Activated CD4-positive, alpha-beta memory T cell treated with anti-CD3 and anti-CD28 coated beads for 36 hours (primary cell): ENCODE measurements at regions of chr15 and their contacts with region 1.

Region 1: GRCh38 chr15:58070801-58071418 is 5.4 kb upstream of the ALDH1A2 start:
- DNase-seq: peak; percentile 65
- H3K4me3 Mint-ChIP-seq: no peak overlapping the region
- H3K27ac Mint-ChIP-seq: no peak overlapping the region
- H3K4me1 Mint-ChIP-seq: peaks cover 6% of the 10 kb centered on the region
- H3K27me3 Mint-ChIP-seq: peaks cover 41% of the 10 kb centered on the region

Region 2: GRCh38 chr15:57561041-57561711 is 509.7 kb before region 1 on chr15:
- CTCF ChIA-PET with region 1: interaction called, 3 read pairs
- POLR2A ChIA-PET with region 1: no interaction called
- intact Hi-C with region 1: loop called (anchors 1 kb)
- DNase-seq: peak; percentile 73
- H3K4me3 Mint-ChIP-seq: peak overlapping the region; percentile 5
- H3K27ac Mint-ChIP-seq: peak overlapping the region; percentile 74
- H3K4me1 Mint-ChIP-seq: peaks cover 39% of the 10 kb centered on the region
- H3K27me3 Mint-ChIP-seq: peaks cover 2% of the 10 kb centered on the region

Region 3: GRCh38 chr15:57680021-57680420 is 390.9 kb before region 1 on chr15:
- CTCF ChIA-PET with region 1: no interaction called
- POLR2A ChIA-PET with region 1: no interaction called
- intact Hi-C with region 1: no loop called
- DNase-seq: no peak
- H3K4me3 Mint-ChIP-seq: no peak overlapping the region
- H3K27ac Mint-ChIP-seq: no peak overlapping the region
- H3K4me1 Mint-ChIP-seq: peaks cover 7% of the 10 kb centered on the region
- H3K27me3 Mint-ChIP-seq: no peaks in the 10 kb centered on the region

Region 4: GRCh38 chr15:57743424-57743823 is 327.5 kb before region 1 on chr15:
- CTCF ChIA-PET with region 1: interaction called, 3 read pairs
- POLR2A ChIA-PET with region 1: no interaction called
- intact Hi-C with region 1: loop called (anchors 10 kb)
- DNase-seq: no peak
- H3K4me3 Mint-ChIP-seq: no peak overlapping the region
- H3K27ac Mint-ChIP-seq: no peak overlapping the region
- H3K4me1 Mint-ChIP-seq: no peaks in the 10 kb centered on the region
- H3K27me3 Mint-ChIP-seq: no peaks in the 10 kb centered on the region

Region 5: DNA sequence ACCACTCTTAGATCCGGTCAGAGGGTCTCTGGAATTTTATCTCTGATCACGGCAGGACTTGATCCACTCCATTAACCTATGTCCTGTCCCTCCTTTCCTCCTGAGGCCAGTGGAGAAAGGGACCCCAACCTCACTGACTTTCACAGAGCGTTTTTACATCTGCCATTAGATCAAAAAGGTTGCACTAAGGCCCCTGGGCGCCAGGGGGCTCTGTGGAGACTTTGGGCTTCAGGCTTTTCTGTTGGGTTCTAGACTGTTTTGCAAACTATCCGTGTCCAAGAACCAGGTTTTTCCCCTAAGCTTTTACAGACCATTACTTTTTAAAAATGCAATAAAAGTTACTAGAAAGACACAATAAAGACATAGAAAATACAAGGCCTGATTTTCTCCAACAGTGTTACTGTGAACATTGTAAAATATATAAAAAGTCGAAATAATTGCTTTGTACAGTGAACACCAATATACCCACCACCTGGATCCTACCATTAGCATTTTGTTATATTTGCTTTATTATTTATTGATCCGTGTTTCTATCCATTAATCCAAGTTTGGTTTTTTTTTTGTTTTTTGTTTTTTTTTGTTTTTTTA is 204.7 kb before region 1 on chr15:
- CTCF ChIA-PET with region 1: interaction called, 26 read pairs
- POLR2A ChIA-PET with region 1: no interaction called
- intact Hi-C with region 1: loop called (anchors 1 kb)
- DNase-seq: peak; percentile 68
- H3K4me3 Mint-ChIP-seq: no peak overlapping the region
- H3K27ac Mint-ChIP-seq: no peak overlapping the region
- H3K4me1 Mint-ChIP-seq: no peaks in the 10 kb centered on the region
- H3K27me3 Mint-ChIP-seq: peaks cover 35% of the 10 kb centered on the region

Region 6: DNA sequence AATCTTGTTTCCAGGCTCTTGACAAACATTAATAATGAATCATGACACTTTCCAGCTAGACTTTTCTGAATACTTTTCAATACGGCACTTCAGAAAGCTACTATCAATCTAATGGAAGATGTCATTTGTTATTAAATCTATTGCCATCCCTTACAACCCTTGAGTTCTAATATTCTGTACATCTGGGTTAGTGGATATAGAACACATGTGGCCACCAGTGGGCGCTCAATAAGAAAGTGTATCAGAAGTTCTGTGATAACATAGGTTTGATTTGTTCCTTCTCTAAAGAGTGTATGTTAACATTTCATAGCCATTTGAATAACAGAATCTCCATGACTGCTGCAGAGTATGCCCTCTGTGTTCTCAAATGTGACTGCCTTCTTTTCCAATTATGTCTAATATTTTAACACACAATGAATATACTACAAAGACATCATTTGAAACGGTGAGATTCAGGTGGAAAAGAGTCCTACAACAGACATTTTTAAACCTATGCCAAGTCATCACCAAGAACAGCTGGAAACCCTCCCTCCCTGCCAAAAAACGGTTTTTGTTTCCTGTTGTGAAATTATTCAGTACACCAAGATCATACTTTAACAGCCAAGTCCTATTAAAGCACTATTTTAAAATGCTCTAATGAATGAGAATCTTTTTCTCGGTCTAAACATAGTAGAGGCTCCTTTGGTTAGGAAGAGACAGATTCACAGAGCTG is 27.6 kb before region 1 on chr15:
- CTCF ChIA-PET with region 1: interaction called, 17 read pairs
- POLR2A ChIA-PET with region 1: no interaction called
- intact Hi-C with region 1: loop called (anchors 2 kb)
- DNase-seq: peak; percentile 49
- H3K4me3 Mint-ChIP-seq: no peak overlapping the region
- H3K27ac Mint-ChIP-seq: no peak overlapping the region
- H3K4me1 Mint-ChIP-seq: no peaks in the 10 kb centered on the region
- H3K27me3 Mint-ChIP-seq: peaks cover 21% of the 10 kb centered on the region

Region 7: DNA sequence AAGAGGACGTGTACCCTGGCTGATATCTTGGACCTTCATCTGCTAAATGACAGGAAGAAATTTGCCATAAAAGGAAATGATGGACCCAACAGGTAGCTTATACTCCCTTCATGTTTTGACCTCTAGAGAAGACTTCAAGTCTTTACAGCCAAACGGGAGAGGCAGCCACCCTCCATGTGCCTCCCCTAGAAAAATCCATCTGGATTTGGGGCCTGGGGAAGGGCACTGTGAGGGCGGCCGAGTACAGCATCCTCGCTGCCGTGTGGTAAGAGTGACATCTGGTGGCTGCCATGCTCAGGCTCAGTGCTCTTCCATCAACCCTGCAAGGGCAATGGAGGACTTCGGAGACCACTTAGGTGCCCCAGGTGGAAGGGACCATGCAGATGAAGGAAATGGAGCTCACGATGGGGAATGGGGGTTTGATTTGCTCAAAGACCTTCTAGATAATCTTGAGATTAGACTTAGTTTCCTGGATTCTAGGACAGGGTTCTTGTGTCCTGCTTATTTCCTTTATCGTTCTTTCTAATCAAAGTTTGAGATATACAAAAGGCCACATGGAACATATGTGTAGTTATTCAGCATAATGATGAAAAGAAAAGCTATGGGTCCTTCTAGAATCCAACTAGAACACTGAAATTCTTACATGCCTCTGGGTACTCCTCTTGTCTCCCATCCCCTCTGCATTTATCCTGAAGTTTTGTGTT is 111.7 kb after region 1 on chr15:
- CTCF ChIA-PET with region 1: interaction called, 4 read pairs
- POLR2A ChIA-PET with region 1: no interaction called
- intact Hi-C with region 1: loop called (anchors 5 kb)
- DNase-seq: peak; percentile 39
- H3K4me3 Mint-ChIP-seq: no peak overlapping the region
- H3K27ac Mint-ChIP-seq: no peak overlapping the region
- H3K4me1 Mint-ChIP-seq: peaks cover 8% of the 10 kb centered on the region
- H3K27me3 Mint-ChIP-seq: peaks cover 24% of the 10 kb centered on the region

Region 8: DNA sequence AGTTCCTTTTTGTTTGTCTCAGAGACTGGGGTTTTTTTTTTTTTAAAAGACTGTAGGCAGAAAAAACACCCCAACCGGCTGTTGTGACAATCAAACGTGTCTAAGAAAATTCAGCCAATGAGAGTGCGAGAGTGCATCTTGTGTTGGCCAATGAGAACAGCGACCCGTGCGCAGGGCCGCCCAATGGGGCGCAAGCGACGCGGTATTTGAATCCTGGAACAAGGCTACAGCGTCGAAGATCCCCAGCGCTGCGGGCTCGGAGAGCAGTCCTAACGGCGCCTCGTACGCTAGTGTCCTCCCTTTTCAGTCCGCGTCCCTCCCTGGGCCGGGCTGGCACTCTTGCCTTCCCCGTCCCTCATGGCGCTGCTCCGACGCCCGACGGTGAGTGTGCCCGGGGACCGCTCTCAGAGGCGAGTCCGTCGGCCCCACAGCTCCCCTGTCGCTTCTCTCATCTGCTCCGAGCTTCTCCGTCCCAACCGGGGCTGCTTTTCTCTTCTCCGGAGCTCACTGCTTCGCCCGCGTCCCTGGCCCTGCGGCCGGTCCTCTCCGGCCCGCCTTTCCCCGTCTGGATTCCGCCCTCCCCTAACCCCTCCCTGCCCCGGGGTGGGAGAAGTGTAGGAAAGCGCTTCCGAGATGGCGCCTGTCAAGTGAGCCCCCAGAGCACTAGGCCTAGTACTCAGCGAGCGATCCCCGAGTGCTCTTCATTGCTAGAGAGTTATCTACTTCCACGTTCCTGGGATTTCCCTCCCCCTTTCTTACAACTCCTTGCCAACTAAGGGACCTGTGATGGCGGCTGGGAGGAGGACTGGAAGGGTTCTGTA is 1034.2 kb after region 1 on chr15 and contains the start of gene CCNB2:
- CTCF ChIA-PET with region 1: no interaction called
- POLR2A ChIA-PET with region 1: no interaction called
- intact Hi-C with region 1: no loop called
- DNase-seq: peak; percentile 92
- H3K4me3 Mint-ChIP-seq: peak within 1 kb of the TSS; percentile 92
- H3K27ac Mint-ChIP-seq: peak within 1 kb of the TSS; percentile 88
- H3K4me1 Mint-ChIP-seq: peaks cover 8% of the 10 kb centered on the region
- H3K27me3 Mint-ChIP-seq: no peaks in the 10 kb centered on the region
- total RNA-seq, gene CCNB2: 74.7 to 76.0 TPM